Caco-2 (cell line): ENCODE measurements at regions of chr20 and their contacts with region 1.

Region 1: GRCh38 chr20:40962730-40963504 is 65.7 kb upstream of the TOP1 start:
- DNase-seq: peak; percentile 91 to 96
- H3K4me3 ChIP-seq: peak overlapping the region; percentile 28
- H3K4me3 Mint-ChIP-seq: peak overlapping the region; percentile 53
- H3K27ac Mint-ChIP-seq: no peak overlapping the region
- H3K4me1 ChIP-seq: peaks cover 11% of the 10 kb centered on the region
- H3K4me1 Mint-ChIP-seq: peaks cover 10% of the 10 kb centered on the region
- H3K27me3 ChIP-seq: no peaks in the 10 kb centered on the region
- H3K27me3 Mint-ChIP-seq: peaks cover 3% of the 10 kb centered on the region
- CTCF ChIP-seq: peak; percentile 96 to 99

Region 2: GRCh38 chr20:39264506-39265172 is 1698.3 kb before region 1 on chr20:
- CTCF ChIA-PET with region 1: interaction called, 3 read pairs
- POLR2A ChIA-PET with region 1: no interaction called
- intact Hi-C with region 1: loop called (anchors 2 kb)
- DNase-seq: peak; percentile 77 to 81
- H3K4me3 ChIP-seq: no peak overlapping the region
- H3K4me3 Mint-ChIP-seq: no peak overlapping the region
- H3K27ac Mint-ChIP-seq: no peak overlapping the region
- H3K4me1 ChIP-seq: no peaks in the 10 kb centered on the region
- H3K4me1 Mint-ChIP-seq: no peaks in the 10 kb centered on the region
- H3K27me3 ChIP-seq: no peaks in the 10 kb centered on the region
- H3K27me3 Mint-ChIP-seq: peaks cover 23% of the 10 kb centered on the region
- CTCF ChIP-seq: peak; percentile 98 to 99

Region 3: GRCh38 chr20:40706977-40707582 is 255.8 kb before region 1 on chr20:
- CTCF ChIA-PET with region 1: interaction called, 18 read pairs
- POLR2A ChIA-PET with region 1: no interaction called
- intact Hi-C with region 1: loop called (anchors 1 kb)
- DNase-seq: peak; percentile 91 to 92
- H3K4me3 ChIP-seq: no peak overlapping the region
- H3K4me3 Mint-ChIP-seq: peak overlapping the region; percentile 12
- H3K27ac Mint-ChIP-seq: peak overlapping the region; percentile 3
- H3K4me1 ChIP-seq: peaks cover 19% of the 10 kb centered on the region
- H3K4me1 Mint-ChIP-seq: peaks cover 10% of the 10 kb centered on the region
- H3K27me3 ChIP-seq: peaks cover 3% of the 10 kb centered on the region; the same call in 1 of the 2 replicates
- H3K27me3 Mint-ChIP-seq: peaks cover 17% of the 10 kb centered on the region
- CTCF ChIP-seq: peak; percentile 67 to 94

Region 4: DNA sequence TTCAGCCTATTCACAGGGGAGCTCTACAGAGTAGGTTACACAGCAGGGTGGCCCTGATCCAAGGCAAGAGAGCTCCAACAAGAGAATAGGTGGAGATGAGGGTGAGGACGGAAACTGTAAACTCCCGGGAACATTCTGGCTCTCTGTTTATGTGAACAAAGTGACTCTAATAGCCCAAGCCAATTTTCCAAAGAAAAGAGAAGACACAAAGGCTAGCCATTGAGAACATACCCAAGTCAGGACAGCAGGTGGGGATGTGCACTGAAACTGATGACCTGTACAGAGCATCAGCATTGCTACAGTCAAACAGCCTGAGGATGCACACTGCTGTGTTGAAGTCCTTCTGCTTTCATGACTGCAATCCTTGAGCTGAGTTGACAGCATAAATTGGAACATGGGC is 70.3 kb before region 1 on chr20:
- CTCF ChIA-PET with region 1: interaction called, 12 read pairs
- POLR2A ChIA-PET with region 1: no interaction called
- intact Hi-C with region 1: loop called (anchors 1 kb)
- DNase-seq: peak; percentile 62 to 64
- H3K4me3 ChIP-seq: no peak overlapping the region
- H3K4me3 Mint-ChIP-seq: no peak overlapping the region
- H3K27ac Mint-ChIP-seq: no peak overlapping the region
- H3K4me1 ChIP-seq: no peaks in the 10 kb centered on the region
- H3K4me1 Mint-ChIP-seq: peaks cover 2% of the 10 kb centered on the region
- H3K27me3 ChIP-seq: no peaks in the 10 kb centered on the region
- H3K27me3 Mint-ChIP-seq: peaks cover 8% of the 10 kb centered on the region
- CTCF ChIP-seq: peak; percentile 58 to 67

Region 5: DNA sequence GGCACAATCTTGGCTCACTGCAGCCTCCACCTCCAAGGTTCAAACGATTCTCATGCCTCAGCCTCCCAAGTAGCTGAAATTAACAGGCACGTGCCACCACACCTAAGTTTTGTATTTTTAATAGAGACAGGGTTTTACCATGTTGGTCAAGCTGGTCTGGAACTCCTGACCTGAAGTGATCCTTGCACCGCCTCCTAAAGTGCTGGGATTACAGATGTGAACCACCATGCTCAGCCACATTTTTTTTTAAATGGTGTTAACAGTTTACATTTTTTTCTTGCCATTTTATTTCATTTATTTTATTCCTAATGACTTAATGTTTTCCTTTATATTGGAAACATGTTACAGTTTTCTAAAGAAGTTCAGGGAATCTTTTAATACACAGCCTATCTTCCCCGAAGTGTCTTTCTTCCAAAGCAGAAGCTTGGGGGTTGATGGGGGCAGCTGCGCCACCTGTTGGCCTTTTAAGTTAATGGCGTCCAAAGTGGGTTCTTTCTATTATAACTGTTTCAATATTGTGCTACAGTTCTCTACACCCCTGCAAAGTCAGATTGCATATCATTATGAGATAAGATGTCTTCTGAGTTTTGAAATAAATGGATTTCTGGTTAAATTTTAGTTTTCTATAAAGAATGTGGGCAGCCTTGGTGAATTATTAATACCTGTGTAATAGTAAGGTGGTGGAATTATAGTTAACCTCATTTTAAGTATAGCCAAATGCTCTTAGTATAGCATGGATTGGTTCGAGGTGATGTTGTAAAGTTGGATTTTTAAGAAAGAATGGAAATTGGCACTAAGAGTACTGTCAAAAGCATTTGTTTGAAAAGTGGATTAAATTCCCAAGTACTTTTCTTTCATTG is 132.4 kb after region 1 on chr20:
- CTCF ChIA-PET with region 1: interaction called, 19 read pairs
- POLR2A ChIA-PET with region 1: no interaction called
- intact Hi-C with region 1: loop called (anchors 1 kb)
- DNase-seq: peak; percentile 66 to 75
- H3K4me3 ChIP-seq: no peak overlapping the region
- H3K4me3 Mint-ChIP-seq: no peak overlapping the region
- H3K27ac Mint-ChIP-seq: no peak overlapping the region
- H3K4me1 ChIP-seq: no peaks in the 10 kb centered on the region
- H3K4me1 Mint-ChIP-seq: no peaks in the 10 kb centered on the region
- H3K27me3 ChIP-seq: no peaks in the 10 kb centered on the region
- H3K27me3 Mint-ChIP-seq: no peaks in the 10 kb centered on the region
- CTCF ChIP-seq: peak; percentile 98 to 99

Region 6: GRCh38 chr20:41173161-41173721 is 210.3 kb after region 1 on chr20:
- CTCF ChIA-PET with region 1: interaction called, 7 read pairs
- POLR2A ChIA-PET with region 1: no interaction called
- intact Hi-C with region 1: loop called (anchors 1 kb)
- DNase-seq: peak; percentile 85 to 94
- H3K4me3 ChIP-seq: no peak overlapping the region
- H3K4me3 Mint-ChIP-seq: no peak overlapping the region
- H3K27ac Mint-ChIP-seq: no peak overlapping the region
- H3K4me1 ChIP-seq: no peaks in the 10 kb centered on the region
- H3K4me1 Mint-ChIP-seq: no peaks in the 10 kb centered on the region
- H3K27me3 ChIP-seq: no peaks in the 10 kb centered on the region
- H3K27me3 Mint-ChIP-seq: no peaks in the 10 kb centered on the region
- CTCF ChIP-seq: peak; percentile 99 to 100

Region 7: GRCh38 chr20:41572010-41572560 is 609.2 kb after region 1 on chr20:
- CTCF ChIA-PET with region 1: no interaction called
- POLR2A ChIA-PET with region 1: no interaction called
- intact Hi-C with region 1: no loop called
- DNase-seq: peak; percentile 71 to 73
- H3K4me3 ChIP-seq: no peak overlapping the region
- H3K4me3 Mint-ChIP-seq: no peak overlapping the region
- H3K27ac Mint-ChIP-seq: no peak overlapping the region
- H3K4me1 ChIP-seq: peaks cover 19% of the 10 kb centered on the region
- H3K4me1 Mint-ChIP-seq: peaks cover 16% of the 10 kb centered on the region
- H3K27me3 ChIP-seq: no peaks in the 10 kb centered on the region
- H3K27me3 Mint-ChIP-seq: no peaks in the 10 kb centered on the region
- CTCF ChIP-seq: peak; percentile 83 to 91

Region 8: DNA sequence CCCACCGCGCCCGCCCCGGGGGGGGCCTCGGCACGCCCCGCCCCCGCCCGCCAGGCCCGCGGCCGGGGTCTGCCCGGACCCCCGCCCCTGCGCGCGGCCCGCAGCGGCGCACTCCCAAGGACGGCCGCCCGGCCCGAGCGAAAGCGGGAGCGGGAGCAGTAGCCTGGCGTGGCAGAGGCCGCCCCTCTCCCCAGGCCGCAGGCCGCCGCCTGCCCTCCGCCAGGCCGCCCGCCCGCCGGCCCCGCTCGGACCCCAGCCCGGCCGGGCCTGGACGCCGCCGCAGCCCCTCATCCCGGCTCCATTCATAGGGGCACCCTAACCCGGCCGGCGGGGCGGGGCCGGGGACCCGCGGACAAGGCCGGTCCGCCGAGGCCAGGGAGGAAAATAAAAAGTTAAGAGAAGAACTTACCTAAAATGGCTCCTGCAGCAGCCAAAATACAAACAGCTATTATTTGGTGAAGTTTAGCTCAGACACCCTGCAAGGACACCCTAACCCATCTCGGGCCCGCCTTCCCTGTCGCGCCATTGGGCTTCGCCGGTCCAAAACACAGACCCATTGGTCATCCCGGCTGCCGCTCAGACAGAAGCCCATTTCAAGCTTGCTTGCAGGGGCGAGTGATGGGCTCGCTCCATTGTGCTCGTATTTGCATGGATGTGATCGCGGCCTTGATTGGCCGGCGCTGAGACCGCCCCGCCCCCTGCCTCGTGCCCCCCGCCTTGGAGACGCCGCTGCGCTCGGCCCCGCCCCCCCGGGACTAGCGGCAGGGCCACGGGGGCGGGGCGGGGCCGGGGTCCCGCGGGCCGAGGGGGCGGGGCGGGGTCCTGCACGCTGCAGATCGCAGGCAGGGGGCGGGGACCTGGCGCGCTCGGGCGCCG is 655.3 kb after region 1 on chr20 and contains the start of gene CHD6:
- CTCF ChIA-PET with region 1: no interaction called
- POLR2A ChIA-PET with region 1: no interaction called
- intact Hi-C with region 1: no loop called
- DNase-seq: peak; percentile 100
- H3K4me3 ChIP-seq: peak within 1 kb of the TSS; percentile 67
- H3K4me3 Mint-ChIP-seq: peak within 1 kb of the TSS; percentile 86
- H3K27ac Mint-ChIP-seq: peak within 1 kb of the TSS; percentile 67
- H3K4me1 ChIP-seq: peaks cover 26% of the 10 kb centered on the region
- H3K4me1 Mint-ChIP-seq: peaks cover 42% of the 10 kb centered on the region
- H3K27me3 ChIP-seq: no peaks in the 10 kb centered on the region
- H3K27me3 Mint-ChIP-seq: no peaks in the 10 kb centered on the region
- CTCF ChIP-seq: no peak
- total RNA-seq, gene CHD6: 80.5 and 88.1 TPM in 2 replicates